CD4-positive, alpha-beta memory T cell (primary cell): ENCODE measurements at regions of chr6 and their contacts with region 1.

Region 1: GRCh38 chr6:87832025-87832825 is 130.2 kb upstream of the AKIRIN2 start:
- DNase-seq: peak in 4 of 5 donors; percentile 37 to 51 (median 44)
- H3K4me3 ChIP-seq: peak overlapping the region in 1 of 2 donors; percentile 46
- H3K4me3 Mint-ChIP-seq: peak overlapping the region; percentile 81 to 95 (median 90)
- H3K27ac ChIP-seq: peak overlapping the region; percentile 44
- H3K27ac Mint-ChIP-seq: peak overlapping the region; percentile 19 to 97 (median 95)
- H3K4me1 ChIP-seq: peaks cover 6% of the 10 kb centered on the region
- H3K4me1 Mint-ChIP-seq: peaks cover 0 to 6% (median 5%) of the 10 kb centered on the region in 4 donors
- H3K27me3 ChIP-seq: no peaks in the 10 kb centered on the region
- H3K27me3 Mint-ChIP-seq: no peaks in the 10 kb centered on the region

Region 2: DNA sequence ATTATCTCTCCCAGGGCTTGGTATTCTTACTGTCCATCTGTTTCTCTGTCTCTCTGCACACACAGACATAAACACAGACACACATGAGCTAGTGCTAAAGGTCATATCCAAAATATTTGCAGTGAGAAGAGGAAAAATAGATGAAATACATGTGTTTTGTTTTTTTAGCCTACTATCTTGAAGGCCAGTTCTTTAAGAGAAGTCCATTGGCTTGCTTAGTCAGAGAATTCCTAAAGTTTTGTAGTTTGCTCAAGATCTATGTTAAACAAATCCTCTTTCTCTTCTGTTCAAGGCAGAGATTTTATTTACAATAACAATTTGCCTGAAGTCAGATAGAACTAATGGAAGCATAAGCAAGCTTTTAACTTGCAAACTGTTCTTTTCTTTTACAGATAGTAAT is 10.2 kb before region 1 on chr6:
- CTCF ChIA-PET with region 1: interaction called, 10 read pairs
- POLR2A ChIA-PET with region 1: no interaction called
- intact Hi-C with region 1: no loop called
- DNase-seq: no peak
- H3K4me3 ChIP-seq: no peak overlapping the region
- H3K4me3 Mint-ChIP-seq: no peak overlapping the region
- H3K27ac ChIP-seq: no peak overlapping the region
- H3K27ac Mint-ChIP-seq: no peak overlapping the region
- H3K4me1 ChIP-seq: peaks cover 16% of the 10 kb centered on the region
- H3K4me1 Mint-ChIP-seq: peaks cover 17 to 19% (median 18%) of the 10 kb centered on the region in 4 donors
- H3K27me3 ChIP-seq: no peaks in the 10 kb centered on the region
- H3K27me3 Mint-ChIP-seq: no peaks in the 10 kb centered on the region

Region 3: GRCh38 chr6:87907521-87907920 is 75.3 kb after region 1 on chr6:
- CTCF ChIA-PET with region 1: no interaction called
- POLR2A ChIA-PET with region 1: no interaction called
- intact Hi-C with region 1: no loop called
- DNase-seq: peak in 3 of 5 donors; percentile 22 to 43 (median 26)
- H3K4me3 ChIP-seq: no peak overlapping the region
- H3K4me3 Mint-ChIP-seq: peak overlapping the region in 2 of 8 donors; percentile 29 to 31
- H3K27ac ChIP-seq: no peak overlapping the region
- H3K27ac Mint-ChIP-seq: no peak overlapping the region
- H3K4me1 ChIP-seq: peaks cover 19% of the 10 kb centered on the region
- H3K4me1 Mint-ChIP-seq: peaks cover 7 to 31% (median 19%) of the 10 kb centered on the region in 4 donors
- H3K27me3 ChIP-seq: no peaks in the 10 kb centered on the region
- H3K27me3 Mint-ChIP-seq: peaks cover 4 to 5% of the 10 kb centered on the region in 2 donors

Region 4: GRCh38 chr6:88119769-88120168 is 287.5 kb after region 1 on chr6:
- CTCF ChIA-PET with region 1: no interaction called
- POLR2A ChIA-PET with region 1: no interaction called
- intact Hi-C with region 1: no loop called
- DNase-seq: no peak
- H3K4me3 ChIP-seq: no peak overlapping the region
- H3K4me3 Mint-ChIP-seq: no peak overlapping the region
- H3K27ac ChIP-seq: no peak overlapping the region
- H3K27ac Mint-ChIP-seq: no peak overlapping the region
- H3K4me1 ChIP-seq: no peaks in the 10 kb centered on the region
- H3K4me1 Mint-ChIP-seq: no peaks in the 10 kb centered on the region
- H3K27me3 ChIP-seq: no peaks in the 10 kb centered on the region
- H3K27me3 Mint-ChIP-seq: peaks cover 4 to 6% of the 10 kb centered on the region in 2 donors